A673 (cell line): ENCODE measurements at regions of chr17 and their contacts with region 1.

Region 1: GRCh38 chr17:40264458-40265185 is 23.1 kb upstream of the CDC6 start:
- DNase-seq: no peak
- H3K4me3 ChIP-seq: no peak overlapping the region
- H3K27ac ChIP-seq: no peak overlapping the region
- H3K4me1 ChIP-seq: no peaks in the 10 kb centered on the region
- H3K27me3 ChIP-seq: no peaks in the 10 kb centered on the region
- CTCF ChIP-seq: no peak

Region 2: GRCh38 chr17:39972271-39972670 is 292.4 kb before region 1 on chr17:
- CTCF ChIA-PET with region 1: no interaction called
- POLR2A ChIA-PET with region 1: no interaction called
- intact Hi-C with region 1: no loop called
- DNase-seq: no peak
- H3K4me3 ChIP-seq: no peak overlapping the region
- H3K27ac ChIP-seq: no peak overlapping the region
- H3K4me1 ChIP-seq: no peaks in the 10 kb centered on the region
- H3K27me3 ChIP-seq: no peaks in the 10 kb centered on the region
- CTCF ChIP-seq: no peak

Region 3: GRCh38 chr17:40041196-40041595 is 223.4 kb before region 1 on chr17:
- CTCF ChIA-PET with region 1: no interaction called
- POLR2A ChIA-PET with region 1: no interaction called
- intact Hi-C with region 1: no loop called
- DNase-seq: no peak
- H3K4me3 ChIP-seq: no peak overlapping the region
- H3K27ac ChIP-seq: no peak overlapping the region
- H3K4me1 ChIP-seq: no peaks in the 10 kb centered on the region
- H3K27me3 ChIP-seq: no peaks in the 10 kb centered on the region
- CTCF ChIP-seq: no peak

Region 4: GRCh38 chr17:40091691-40092397 is 172.8 kb before region 1 on chr17:
- CTCF ChIA-PET with region 1: interaction called, 18 read pairs
- POLR2A ChIA-PET with region 1: no interaction called
- intact Hi-C with region 1: no loop called
- DNase-seq: no peak
- H3K4me3 ChIP-seq: no peak overlapping the region
- H3K27ac ChIP-seq: no peak overlapping the region
- H3K4me1 ChIP-seq: no peaks in the 10 kb centered on the region
- H3K27me3 ChIP-seq: no peaks in the 10 kb centered on the region
- CTCF ChIP-seq: no peak

Region 5: DNA sequence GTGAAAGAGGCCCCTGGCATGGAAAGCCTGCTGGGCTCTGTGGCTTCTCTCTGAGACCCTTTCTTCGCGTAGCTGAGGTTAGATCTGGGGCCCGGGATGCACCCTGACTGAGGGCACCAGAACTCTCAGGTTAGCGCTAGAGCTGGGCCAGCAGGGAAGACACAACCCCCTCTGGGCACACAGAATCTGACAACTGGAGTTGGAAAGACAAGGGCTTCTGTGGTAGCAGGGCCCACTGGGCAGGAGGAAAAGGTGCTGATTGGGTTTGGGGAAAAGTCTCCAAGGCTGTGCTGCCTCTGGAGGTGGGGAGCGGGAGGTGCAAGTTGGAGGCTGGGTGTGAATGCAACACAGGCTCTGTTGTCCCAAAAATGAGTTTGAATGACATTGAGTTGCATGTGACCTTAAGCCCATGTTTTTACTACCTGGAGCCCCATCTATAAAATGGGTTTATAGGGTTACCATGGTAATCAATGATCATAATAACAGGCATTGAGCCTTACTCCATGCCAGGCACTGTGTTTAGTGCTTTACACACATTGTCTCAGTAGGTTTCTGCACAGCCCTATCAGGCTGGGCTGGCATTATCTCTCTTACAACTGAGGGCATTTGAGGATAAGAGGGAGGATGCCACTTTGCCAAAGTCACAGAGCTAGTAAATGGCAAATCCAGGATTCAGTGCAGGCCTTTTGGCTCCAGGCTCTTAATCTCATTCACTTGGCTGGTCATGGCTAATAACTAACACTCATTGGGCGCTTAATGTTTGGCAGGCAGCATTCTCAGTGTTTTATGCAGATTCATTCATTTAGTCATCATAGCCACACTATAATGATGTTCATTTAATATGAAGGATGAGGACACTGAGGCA is 169.2 kb after region 1 on chr17:
- CTCF ChIA-PET with region 1: no interaction called
- POLR2A ChIA-PET with region 1: no interaction called
- intact Hi-C with region 1: no loop called
- DNase-seq: no peak
- H3K4me3 ChIP-seq: no peak overlapping the region
- H3K27ac ChIP-seq: no peak overlapping the region
- H3K4me1 ChIP-seq: no peaks in the 10 kb centered on the region
- H3K27me3 ChIP-seq: no peaks in the 10 kb centered on the region
- CTCF ChIP-seq: peak; percentile 47

Region 6: DNA sequence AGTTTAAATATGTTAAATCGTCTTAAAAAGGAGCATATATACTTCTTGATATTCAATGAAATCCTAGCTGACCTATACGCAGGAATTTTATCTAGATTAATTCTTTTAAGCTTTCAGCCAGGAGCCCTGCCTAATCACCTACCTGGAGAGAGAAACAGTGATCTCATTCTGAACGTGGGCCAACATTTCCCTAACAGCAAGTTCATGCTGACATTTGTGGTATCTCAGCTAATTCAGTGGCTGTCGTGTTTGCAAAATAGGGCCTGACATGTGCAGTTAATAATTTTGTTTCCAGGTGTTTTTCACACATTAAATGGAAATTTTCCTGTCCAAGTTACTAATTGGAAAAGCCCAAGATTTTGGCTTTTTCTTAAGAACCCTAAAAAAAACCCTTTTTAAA is 421.6 kb after region 1 on chr17:
- CTCF ChIA-PET with region 1: no interaction called
- POLR2A ChIA-PET with region 1: no interaction called
- intact Hi-C with region 1: no loop called
- DNase-seq: no peak
- H3K4me3 ChIP-seq: no peak overlapping the region
- H3K27ac ChIP-seq: no peak overlapping the region
- H3K4me1 ChIP-seq: no peaks in the 10 kb centered on the region
- H3K27me3 ChIP-seq: no peaks in the 10 kb centered on the region
- CTCF ChIP-seq: no peak